ENCODE measurements at regions of chr17 and their contacts with region 1.

Region 1: DNA sequence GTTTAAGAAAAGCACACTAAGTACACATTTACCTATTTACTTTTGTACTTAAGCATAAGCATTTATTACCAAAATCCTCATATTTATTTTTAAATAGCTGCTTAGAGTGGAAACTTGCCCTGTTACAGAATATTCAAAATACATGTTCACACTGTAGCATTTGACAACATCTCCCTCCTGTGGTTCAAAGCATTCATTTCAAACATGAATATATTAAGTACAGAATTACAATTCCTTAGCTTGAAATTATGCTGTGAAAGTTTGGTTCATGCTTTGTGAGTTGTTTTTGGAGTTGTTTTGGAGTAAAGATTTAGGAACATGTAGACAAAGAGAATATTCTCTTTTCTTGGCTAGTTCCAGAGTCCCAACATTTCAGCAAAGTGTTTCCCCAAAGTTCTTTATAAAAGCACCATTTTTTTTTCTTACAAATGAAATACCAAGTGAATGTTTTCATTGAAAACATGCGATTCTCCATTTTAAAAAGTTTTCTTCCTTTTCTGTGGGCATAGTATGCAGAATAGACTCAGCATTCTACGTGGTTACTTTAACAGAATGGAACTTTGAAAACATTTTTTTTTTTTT is 33.2 kb downstream of the TUBD1 start:
- DNase-seq: no peak
- H3K4me3 ChIP-seq: no peak overlapping the region
- H3K4me3 Mint-ChIP-seq: no peak overlapping the region
- H3K27ac Mint-ChIP-seq: no peak overlapping the region
- H3K4me1 ChIP-seq: peaks cover 38% of the 10 kb centered on the region
- H3K4me1 Mint-ChIP-seq: peaks cover 15% of the 10 kb centered on the region
- H3K27me3 ChIP-seq: no peaks in the 10 kb centered on the region
- H3K27me3 Mint-ChIP-seq: no peaks in the 10 kb centered on the region
- CTCF ChIP-seq: peak; percentile 35 to 55

Region 2: DNA sequence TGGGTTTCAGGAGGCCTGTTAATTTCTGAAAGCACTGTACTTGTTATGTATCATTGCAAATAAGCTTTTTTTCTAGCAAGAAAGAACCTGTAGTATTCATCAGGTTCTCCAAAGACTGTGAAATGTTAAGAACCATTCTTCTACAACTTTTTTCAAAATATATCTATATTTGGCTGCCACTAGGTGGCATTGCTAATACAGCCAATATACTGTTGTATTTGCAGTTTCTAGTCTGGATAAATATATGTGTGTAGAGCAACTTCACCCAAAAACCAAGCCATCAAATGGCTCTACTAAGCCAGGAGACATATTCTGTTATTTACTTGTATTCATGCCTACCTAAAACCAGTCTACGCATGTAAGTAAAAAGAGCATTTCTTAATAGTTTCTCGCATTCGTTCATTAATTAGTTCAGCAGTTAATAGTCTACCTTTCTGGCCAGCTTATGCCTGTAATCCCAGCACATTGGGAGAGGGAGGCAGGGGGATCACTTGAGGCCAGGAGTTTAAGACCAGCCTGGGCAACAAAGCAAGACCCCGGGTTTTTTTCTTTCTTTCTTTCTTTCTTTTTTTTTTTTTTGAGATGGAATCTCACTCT is 112.6 kb before region 1 on chr17:
- CTCF ChIA-PET with region 1: interaction called, 21 read pairs
- POLR2A ChIA-PET with region 1: interaction called, 3 read pairs
- intact Hi-C with region 1: loop called (anchors 1 kb)
- DNase-seq: peak in 1 of 2 experiments; percentile 38
- H3K4me3 ChIP-seq: no peak overlapping the region
- H3K4me3 Mint-ChIP-seq: no peak overlapping the region
- H3K27ac Mint-ChIP-seq: no peak overlapping the region
- H3K4me1 ChIP-seq: no peaks in the 10 kb centered on the region
- H3K4me1 Mint-ChIP-seq: peaks cover 3% of the 10 kb centered on the region
- H3K27me3 ChIP-seq: no peaks in the 10 kb centered on the region
- H3K27me3 Mint-ChIP-seq: no peaks in the 10 kb centered on the region
- CTCF ChIP-seq: peak; percentile 65 to 73

Region 3: DNA sequence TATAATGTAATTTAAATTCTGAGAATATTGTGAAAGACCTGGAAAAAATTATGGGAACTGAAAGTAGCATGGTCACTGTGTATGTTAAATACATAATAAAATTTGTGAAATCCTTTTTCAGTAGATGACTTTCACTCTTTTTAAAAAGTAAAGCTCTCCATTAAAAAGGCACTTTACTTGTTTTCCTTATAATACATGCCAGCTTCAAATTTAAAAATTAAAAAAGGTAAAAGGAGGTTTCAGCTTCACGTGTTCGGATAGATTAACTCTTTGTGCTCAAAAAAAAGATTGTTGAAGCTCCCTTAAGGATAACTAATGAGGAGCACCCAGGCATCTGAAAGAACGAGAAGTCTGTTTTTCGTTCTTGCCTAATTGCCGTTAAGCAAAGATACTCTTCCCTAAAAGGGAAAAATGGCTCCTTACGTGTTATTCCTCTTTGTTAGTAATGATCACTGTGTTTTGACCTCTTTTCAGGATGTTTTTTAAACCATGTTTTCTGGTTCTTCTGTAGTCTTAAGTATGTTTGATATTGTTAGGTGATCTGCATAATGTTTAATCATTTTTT is 54.6 kb before region 1 on chr17:
- CTCF ChIA-PET with region 1: no interaction called
- POLR2A ChIA-PET with region 1: no interaction called
- intact Hi-C with region 1: no loop called
- DNase-seq: no peak
- H3K4me3 ChIP-seq: no peak overlapping the region
- H3K4me3 Mint-ChIP-seq: no peak overlapping the region
- H3K27ac Mint-ChIP-seq: no peak overlapping the region
- H3K4me1 ChIP-seq: peaks cover 19% of the 10 kb centered on the region; the same call in 1 of the 2 replicates
- H3K4me1 Mint-ChIP-seq: peaks cover 15% of the 10 kb centered on the region
- H3K27me3 ChIP-seq: no peaks in the 10 kb centered on the region
- H3K27me3 Mint-ChIP-seq: no peaks in the 10 kb centered on the region
- CTCF ChIP-seq: no peak

Region 4: DNA sequence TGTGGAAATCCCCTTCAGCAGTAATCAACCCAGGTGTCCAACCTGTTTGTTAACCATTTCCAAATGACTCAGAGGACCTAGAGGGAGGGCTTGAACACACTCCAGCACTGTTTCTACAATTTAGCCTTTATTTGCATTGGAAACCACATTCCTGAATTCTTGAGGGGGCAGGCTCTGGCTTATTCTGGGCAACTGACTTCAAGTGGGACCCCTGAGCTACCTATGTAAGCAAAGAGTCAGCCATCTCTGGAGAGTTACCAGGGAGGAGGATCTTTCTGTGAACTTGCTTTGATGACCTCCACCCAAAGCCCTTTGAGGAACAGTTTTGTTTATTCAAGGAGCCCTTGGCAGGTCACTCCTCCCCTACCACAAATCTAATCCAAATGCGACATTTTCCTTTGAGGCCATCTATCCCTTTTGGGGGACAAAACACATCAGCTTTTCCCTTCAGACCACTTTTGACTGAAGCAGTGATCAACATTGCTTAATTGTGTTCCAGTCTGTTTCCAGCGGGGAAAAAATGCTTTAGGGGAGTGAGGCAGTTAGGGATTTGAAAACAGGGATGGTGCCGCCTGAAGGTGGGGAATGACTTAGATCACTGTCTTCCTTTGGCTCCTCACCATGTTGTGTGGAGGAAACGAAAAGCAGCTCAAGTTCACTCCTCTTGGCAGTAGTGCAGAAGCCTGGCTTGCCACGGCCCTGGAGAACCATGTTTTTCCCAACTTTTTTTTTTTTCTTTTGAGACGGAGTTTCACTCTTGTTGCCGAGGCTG is 13.0 kb before region 1 on chr17:
- CTCF ChIA-PET with region 1: interaction called, 9 read pairs
- POLR2A ChIA-PET with region 1: no interaction called
- intact Hi-C with region 1: loop called (anchors 2 kb)
- DNase-seq: peak; percentile 79 to 80
- H3K4me3 ChIP-seq: no peak overlapping the region
- H3K4me3 Mint-ChIP-seq: peak overlapping the region; percentile 89
- H3K27ac Mint-ChIP-seq: peak overlapping the region; percentile 98
- H3K4me1 ChIP-seq: peaks cover 81% of the 10 kb centered on the region
- H3K4me1 Mint-ChIP-seq: peaks cover 68% of the 10 kb centered on the region
- H3K27me3 ChIP-seq: no peaks in the 10 kb centered on the region
- H3K27me3 Mint-ChIP-seq: no peaks in the 10 kb centered on the region
- CTCF ChIP-seq: no peak